ENCODE measurements at regions of chr1 and their contacts with region 1.

Region 1: DNA sequence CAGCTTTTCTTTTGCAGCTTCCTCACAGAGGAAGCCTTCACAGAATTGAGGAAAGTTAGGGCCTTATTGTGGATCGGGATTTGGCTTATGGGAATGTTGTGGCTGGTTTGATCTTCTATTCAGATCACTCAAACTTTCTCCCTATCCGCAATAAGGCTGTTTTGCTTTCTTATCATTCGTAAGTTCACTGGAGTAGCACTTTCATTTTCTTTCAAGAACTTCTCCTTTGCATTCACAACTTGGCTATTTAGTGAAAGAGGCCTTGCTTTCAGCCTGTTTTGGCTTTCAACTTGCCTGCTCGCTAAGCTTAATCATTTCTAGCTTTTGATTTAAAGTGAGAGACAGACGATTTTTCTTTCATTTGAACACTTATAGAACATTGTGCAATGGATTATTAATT is 181.9 kb upstream of the B3GALT2 start:
- DNase-seq: peak in 4 of 9 donors; percentile 5 to 20 (median 13)
- ATAC-seq: peak; percentile 42
- H3K4me3 ChIP-seq: peak overlapping the region; percentile 41
- H3K4me3 Mint-ChIP-seq: peak overlapping the region in 9 of 10 donors; percentile 60 to 85 (median 72)
- H3K27ac ChIP-seq: peak overlapping the region; percentile 63
- H3K27ac Mint-ChIP-seq: peak overlapping the region; percentile 68 to 96 (median 85)
- H3K4me1 ChIP-seq: peaks cover 0 to 4% of the 10 kb centered on the region in 2 donors
- H3K4me1 Mint-ChIP-seq: peaks cover 6 to 18% (median 7%) of the 10 kb centered on the region in 7 donors
- H3K27me3 ChIP-seq: no peaks in the 10 kb centered on the region
- H3K27me3 Mint-ChIP-seq: peaks cover 0 to 10% (median 2%) of the 10 kb centered on the region in 5 donors

Region 2: GRCh38 chr1:192263436-192263835 is 1104.9 kb before region 1 on chr1:
- CTCF ChIA-PET with region 1: no interaction called
- POLR2A ChIA-PET with region 1: no interaction called
- intact Hi-C with region 1: no loop called
- DNase-seq: no peak
- ATAC-seq: no peak
- H3K4me3 ChIP-seq: no peak overlapping the region
- H3K4me3 Mint-ChIP-seq: no peak overlapping the region
- H3K27ac ChIP-seq: no peak overlapping the region
- H3K27ac Mint-ChIP-seq: no peak overlapping the region
- H3K4me1 ChIP-seq: no peaks in the 10 kb centered on the region
- H3K4me1 Mint-ChIP-seq: no peaks in the 10 kb centered on the region
- H3K27me3 ChIP-seq: no peaks in the 10 kb centered on the region
- H3K27me3 Mint-ChIP-seq: no peaks in the 10 kb centered on the region

Region 3: DNA sequence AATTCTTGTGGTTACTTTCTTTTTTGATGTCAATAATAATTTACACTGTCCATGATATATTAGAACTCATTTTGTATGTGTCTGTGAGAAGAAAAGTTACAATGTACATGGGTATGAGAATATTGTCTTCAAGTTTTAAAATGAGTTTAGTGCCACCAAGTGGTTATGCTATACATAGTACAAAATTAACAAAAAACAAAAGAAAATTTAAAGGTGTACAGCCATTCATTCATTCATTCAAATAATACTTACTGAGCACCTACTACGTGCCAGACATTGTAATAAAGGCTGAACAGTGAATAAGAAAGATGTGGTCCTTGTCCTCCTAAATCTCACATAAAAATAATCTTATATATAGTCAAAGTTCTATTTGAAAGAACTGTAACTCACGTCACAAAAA is 336.9 kb before region 1 on chr1:
- CTCF ChIA-PET with region 1: no interaction called
- POLR2A ChIA-PET with region 1: no interaction called
- intact Hi-C with region 1: no loop called
- DNase-seq: peak in 1 of 9 donors; percentile 2
- ATAC-seq: peak; percentile 54
- H3K4me3 ChIP-seq: no peak overlapping the region
- H3K4me3 Mint-ChIP-seq: no peak overlapping the region
- H3K27ac ChIP-seq: no peak overlapping the region
- H3K27ac Mint-ChIP-seq: no peak overlapping the region
- H3K4me1 ChIP-seq: no peaks in the 10 kb centered on the region
- H3K4me1 Mint-ChIP-seq: peaks cover 10 to 31% (median 29%) of the 10 kb centered on the region in 7 donors
- H3K27me3 ChIP-seq: no peaks in the 10 kb centered on the region
- H3K27me3 Mint-ChIP-seq: no peaks in the 10 kb centered on the region

Region 4: DNA sequence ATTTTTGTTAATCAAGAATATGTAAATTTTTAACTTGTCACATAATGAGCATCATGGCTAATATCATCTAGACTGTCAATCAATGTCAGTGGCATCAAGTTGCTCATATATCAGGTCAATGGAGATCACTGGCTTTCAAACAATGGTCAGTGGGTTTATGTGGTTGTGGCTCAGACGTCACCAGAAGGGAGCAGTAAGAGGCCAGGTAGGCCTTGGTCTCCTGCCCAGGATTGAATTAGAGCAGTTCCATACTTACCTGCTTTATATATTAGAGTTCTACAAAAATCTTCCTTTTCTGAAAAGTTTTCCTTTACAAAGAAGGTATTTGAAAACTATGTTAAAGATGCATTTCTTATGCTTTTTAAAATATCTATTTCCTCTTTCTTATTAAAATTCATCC is 24.4 kb after region 1 on chr1:
- CTCF ChIA-PET with region 1: interaction called, 10 read pairs
- POLR2A ChIA-PET with region 1: no interaction called
- intact Hi-C with region 1: no loop called
- DNase-seq: no peak
- ATAC-seq: no peak
- H3K4me3 ChIP-seq: no peak overlapping the region
- H3K4me3 Mint-ChIP-seq: no peak overlapping the region
- H3K27ac ChIP-seq: no peak overlapping the region
- H3K27ac Mint-ChIP-seq: no peak overlapping the region
- H3K4me1 ChIP-seq: no peaks in the 10 kb centered on the region
- H3K4me1 Mint-ChIP-seq: peaks cover 0 to 5% (median 0%) of the 10 kb centered on the region in 7 donors
- H3K27me3 ChIP-seq: no peaks in the 10 kb centered on the region
- H3K27me3 Mint-ChIP-seq: peaks cover 0 to 2% (median 0%) of the 10 kb centered on the region in 5 donors

Measured in naive thymus-derived CD4-positive, alpha-beta T cell (primary cell).